Gastrocnemius medialis (tissue), 4 donors: ENCODE measurements at regions of chr20 and their contacts with region 1.

Region 1: GRCh38 chr20:59042796-59043660 is 442 bp upstream of the PRELID3B start:
- DNase-seq: peak; percentile 85 to 92
- ATAC-seq: peak; percentile 91 to 97
- H3K4me3 ChIP-seq: peak overlapping the region; percentile 83 to 96 (median 86)
- H3K27ac ChIP-seq: peak overlapping the region; percentile 84 to 92 (median 90)
- H3K4me1 ChIP-seq: peaks cover 28 to 30% of the 10 kb centered on the region in 2 donors
- H3K27me3 ChIP-seq: no peaks in the 10 kb centered on the region
- CTCF ChIP-seq: peak in 2 of 5 experiments; percentile 12 to 41
- POLR2A ChIP-seq: no peak

Region 2: DNA sequence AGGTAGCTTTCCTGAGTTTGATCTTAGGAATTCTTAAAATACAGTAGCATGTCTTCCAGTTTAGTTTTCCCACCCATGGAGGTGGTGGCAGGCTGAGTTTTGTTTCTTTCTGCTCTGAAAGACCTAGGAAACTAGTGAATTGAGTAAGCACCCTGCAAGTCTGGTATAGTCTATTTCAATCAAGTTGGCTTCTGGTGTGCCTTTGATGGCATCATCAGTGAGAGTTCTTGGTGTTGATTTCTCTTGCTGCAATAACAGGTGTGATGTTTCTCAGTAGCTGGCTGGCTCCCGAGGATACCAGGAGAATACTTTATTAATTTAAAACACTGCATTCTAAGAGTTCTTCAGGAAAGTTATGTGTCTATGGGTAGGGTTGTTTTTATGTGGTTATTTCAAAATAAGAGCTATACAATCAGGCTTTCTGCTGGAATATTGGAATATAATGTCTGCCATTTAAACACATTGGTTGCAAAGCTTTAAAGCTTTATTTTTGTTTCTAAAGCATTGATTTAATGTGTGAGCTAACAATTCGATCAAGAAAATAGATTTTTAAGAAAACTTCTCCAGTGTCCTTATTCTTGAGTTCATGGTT is 635.0 kb before region 1 on chr20:
- in situ Hi-C with region 1: no loop called
- intact Hi-C with region 1: loop called (anchors 10 kb)
- DNase-seq: peak; percentile 59 to 69
- ATAC-seq: peak; percentile 98 to 99
- H3K4me3 ChIP-seq: peak overlapping the region; percentile 8 to 28 (median 16)
- H3K27ac ChIP-seq: peak overlapping the region; percentile 80 to 81 (median 80)
- H3K4me1 ChIP-seq: peaks cover 64 to 76% of the 10 kb centered on the region in 2 donors
- H3K27me3 ChIP-seq: no peaks in the 10 kb centered on the region
- CTCF ChIP-seq: no peak
- POLR2A ChIP-seq: no peak

Region 3: GRCh38 chr20:58692594-58693226 is 350.3 kb before region 1 on chr20 and contains the start of gene NPEPL1:
- in situ Hi-C with region 1: loop called in 1 of 4 experiments (anchors 25 kb)
- intact Hi-C with region 1: loop called (anchors 5 kb)
- DNase-seq: peak in 1 of 2 donors; percentile 58
- ATAC-seq: peak; percentile 80 to 81
- H3K4me3 ChIP-seq: peak within 1 kb of the TSS; percentile 51 to 66 (median 58)
- H3K27ac ChIP-seq: peak within 1 kb of the TSS; percentile 81 to 90 (median 86)
- H3K4me1 ChIP-seq: peaks cover 32 to 38% of the 10 kb centered on the region in 2 donors
- H3K27me3 ChIP-seq: no peaks in the 10 kb centered on the region
- CTCF ChIP-seq: peak in 4 of 5 experiments; percentile 35 to 61 (median 45)
- POLR2A ChIP-seq: peak in 1 of 2 donors; percentile 38
- total RNA-seq, gene NPEPL1: 18.1 to 51.5 (median 34.3) TPM

Region 4: DNA sequence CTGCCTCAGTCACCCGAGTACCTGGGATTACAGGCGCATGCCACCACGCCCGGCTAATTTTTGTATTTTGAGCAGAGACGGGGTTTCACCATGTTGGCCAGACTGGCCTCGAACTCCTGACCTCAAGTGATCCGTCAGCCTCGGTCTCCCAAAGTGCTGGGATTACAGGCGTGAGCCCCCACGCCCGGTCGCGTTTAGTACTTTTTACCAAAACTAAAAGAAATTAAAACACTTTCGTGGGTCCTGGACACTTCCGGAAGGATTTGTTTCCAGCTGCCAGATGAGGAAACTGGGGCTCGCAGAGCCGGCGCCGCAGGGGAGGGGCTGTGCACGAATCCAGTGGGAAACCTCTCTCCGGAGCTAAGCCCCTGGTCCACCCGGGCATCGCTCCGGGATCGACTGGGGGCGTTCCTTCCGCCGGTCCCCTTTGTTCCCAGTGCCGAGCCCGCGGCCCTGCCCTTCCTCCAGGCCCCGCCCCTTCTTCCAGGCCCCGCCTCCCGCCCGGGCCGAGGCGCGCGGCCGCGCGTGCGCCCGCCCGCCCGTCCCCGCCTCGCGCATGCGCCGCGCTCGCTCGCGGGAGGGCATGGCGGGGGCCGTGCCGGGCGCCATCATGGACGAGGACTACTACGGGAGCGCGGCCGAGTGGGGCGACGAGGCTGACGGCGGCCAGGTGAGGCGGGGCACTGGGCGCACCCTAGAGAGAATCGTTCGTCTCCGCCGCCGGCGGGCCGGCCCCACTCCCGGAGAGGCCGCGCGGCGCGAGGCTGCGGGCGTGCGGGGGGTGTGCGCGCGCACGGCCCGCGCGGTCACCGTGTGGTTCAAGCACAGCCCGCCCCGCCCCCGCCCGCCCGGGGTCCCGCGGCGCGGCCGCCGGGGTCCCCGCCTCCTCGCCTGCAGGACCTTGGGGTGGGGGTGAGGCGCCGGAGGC is 62.1 kb before region 1 on chr20 and contains the start of gene NELFCD:
- in situ Hi-C with region 1: loop called in 3 of 4 experiments (anchors 5 to 10 kb)
- intact Hi-C with region 1: no loop called
- DNase-seq: peak; percentile 72 to 82
- ATAC-seq: peak; percentile 89 to 92
- H3K4me3 ChIP-seq: peak within 1 kb of the TSS; percentile 90 to 100 (median 95)
- H3K27ac ChIP-seq: peak within 1 kb of the TSS; percentile 83 to 92 (median 90)
- H3K4me1 ChIP-seq: peaks cover 32 to 38% of the 10 kb centered on the region in 2 donors
- H3K27me3 ChIP-seq: no peaks in the 10 kb centered on the region
- CTCF ChIP-seq: no peak
- POLR2A ChIP-seq: peak; percentile 80
- total RNA-seq, gene NELFCD: 37.8 to 44.3 (median 40.9) TPM

Region 5: GRCh38 chr20:59074445-59074844 is 31.4 kb after region 1 on chr20:
- in situ Hi-C with region 1: no loop called
- intact Hi-C with region 1: no loop called
- DNase-seq: no peak
- ATAC-seq: no peak
- H3K4me3 ChIP-seq: no peak overlapping the region
- H3K27ac ChIP-seq: no peak overlapping the region
- H3K4me1 ChIP-seq: no peaks in the 10 kb centered on the region
- H3K27me3 ChIP-seq: peaks cover 0 to 9% (median 8%) of the 10 kb centered on the region in 3 donors
- CTCF ChIP-seq: no peak
- POLR2A ChIP-seq: no peak